ENCODE measurements at regions of chr1 and their contacts with region 1.

Region 1: GRCh38 chr1:209747580-209748262 is 8.1 kb upstream of the TRAF3IP3 start:
- DNase-seq: peak; percentile 95
- H3K4me3 Mint-ChIP-seq: peak overlapping the region; percentile 83
- H3K27ac Mint-ChIP-seq: peak overlapping the region; percentile 88
- H3K4me1 Mint-ChIP-seq: peaks cover 70% of the 10 kb centered on the region
- H3K27me3 Mint-ChIP-seq: no peaks in the 10 kb centered on the region

Region 2: GRCh38 chr1:209576798-209577197 is 170.9 kb before region 1 on chr1:
- intact Hi-C with region 1: loop called (anchors 1 kb)
- DNase-seq: peak; percentile 92
- H3K4me3 Mint-ChIP-seq: no peak overlapping the region
- H3K27ac Mint-ChIP-seq: no peak overlapping the region
- H3K4me1 Mint-ChIP-seq: peaks cover 5% of the 10 kb centered on the region
- H3K27me3 Mint-ChIP-seq: peaks cover 33% of the 10 kb centered on the region

Region 3: DNA sequence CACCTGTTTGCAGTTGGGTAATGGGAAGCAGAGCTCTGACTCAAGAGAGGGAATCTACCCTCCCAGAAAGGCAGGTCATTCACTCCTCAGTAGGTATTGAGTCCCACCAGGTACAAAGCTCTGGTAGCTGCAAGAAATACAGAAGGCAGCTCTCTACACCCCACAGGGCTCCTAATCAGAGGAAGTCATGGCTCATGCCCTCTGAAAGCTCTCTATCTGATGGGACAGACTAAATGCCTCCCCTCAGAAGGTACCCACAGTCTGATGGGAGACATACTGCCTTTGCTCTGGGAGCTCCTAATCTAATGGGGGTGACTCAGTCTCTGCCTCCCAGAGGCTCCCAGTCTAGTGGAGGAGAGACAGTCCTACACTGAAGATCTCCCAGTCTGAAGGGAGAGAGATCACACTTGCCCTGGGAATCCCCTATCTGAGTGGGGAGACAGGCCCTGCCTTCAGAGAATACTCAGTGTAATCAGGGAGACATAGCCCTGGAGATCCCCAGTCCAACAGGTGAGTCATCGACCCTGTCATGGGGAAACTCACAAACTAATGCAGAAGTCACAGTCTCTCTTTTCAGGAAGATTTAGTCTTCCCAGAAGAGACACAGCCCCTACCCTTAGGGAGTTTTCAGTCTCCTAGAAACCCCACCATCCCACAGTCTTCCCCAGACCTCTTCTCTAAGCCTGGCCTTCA is 140.5 kb before region 1 on chr1:
- intact Hi-C with region 1: loop called (anchors 1 kb)
- DNase-seq: peak; percentile 71
- H3K4me3 Mint-ChIP-seq: peak overlapping the region; percentile 17
- H3K27ac Mint-ChIP-seq: peak overlapping the region; percentile 45
- H3K4me1 Mint-ChIP-seq: peaks cover 10% of the 10 kb centered on the region
- H3K27me3 Mint-ChIP-seq: no peaks in the 10 kb centered on the region

Region 4: DNA sequence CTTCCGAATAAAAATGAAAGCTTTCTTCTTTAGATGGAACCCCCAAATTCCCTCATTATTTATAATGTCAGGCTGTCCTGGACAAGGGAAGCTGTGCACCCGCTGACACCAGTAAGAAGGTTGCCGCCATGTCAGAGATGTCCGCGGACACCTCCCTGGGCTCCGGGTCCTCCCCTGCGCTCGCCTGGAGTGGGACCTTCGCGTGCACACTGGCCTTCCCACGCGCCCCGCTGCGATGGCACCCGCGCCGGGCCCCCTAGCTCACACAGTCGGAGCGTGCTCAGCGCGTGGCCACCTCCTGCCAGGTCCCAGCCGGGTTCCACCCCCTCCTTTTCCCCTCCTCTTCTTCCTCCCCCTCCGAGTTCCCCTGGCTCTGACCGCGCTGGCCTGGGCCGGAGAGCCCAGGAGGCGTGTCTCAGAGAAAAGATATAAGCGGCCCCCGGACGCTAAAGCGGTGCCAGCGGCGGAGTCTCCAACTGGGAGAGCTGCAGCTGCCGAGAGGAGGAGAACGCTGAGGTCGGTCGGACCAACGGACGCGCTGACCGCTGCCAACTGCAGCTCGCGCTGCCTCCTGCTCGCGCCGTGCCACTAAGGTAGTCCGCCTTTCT is 72.7 kb before region 1 on chr1 and contains the start of gene G0S2:
- intact Hi-C with region 1: loop called (anchors 1 kb)
- DNase-seq: peak; percentile 82
- H3K4me3 Mint-ChIP-seq: peak within 1 kb of the TSS; percentile 89
- H3K27ac Mint-ChIP-seq: peak within 1 kb of the TSS; percentile 79
- H3K4me1 Mint-ChIP-seq: peaks cover 75% of the 10 kb centered on the region
- H3K27me3 Mint-ChIP-seq: peaks cover 6% of the 10 kb centered on the region
- total RNA-seq, gene G0S2: 449 and 477 TPM in 2 replicates

Region 5: GRCh38 chr1:209710093-209710492 is 37.6 kb before region 1 on chr1:
- intact Hi-C with region 1: loop called (anchors 5 kb)
- DNase-seq: no peak
- H3K4me3 Mint-ChIP-seq: peak overlapping the region; percentile 55
- H3K27ac Mint-ChIP-seq: peak overlapping the region; percentile 93
- H3K4me1 Mint-ChIP-seq: peaks cover 63% of the 10 kb centered on the region
- H3K27me3 Mint-ChIP-seq: no peaks in the 10 kb centered on the region

Region 6: GRCh38 chr1:209736490-209737117 is 11.1 kb before region 1 on chr1:
- intact Hi-C with region 1: loop called (anchors 1 kb)
- DNase-seq: no peak
- H3K4me3 Mint-ChIP-seq: peak overlapping the region; percentile 34
- H3K27ac Mint-ChIP-seq: peak overlapping the region; percentile 93
- H3K4me1 Mint-ChIP-seq: peaks cover 54% of the 10 kb centered on the region
- H3K27me3 Mint-ChIP-seq: no peaks in the 10 kb centered on the region

Region 7: DNA sequence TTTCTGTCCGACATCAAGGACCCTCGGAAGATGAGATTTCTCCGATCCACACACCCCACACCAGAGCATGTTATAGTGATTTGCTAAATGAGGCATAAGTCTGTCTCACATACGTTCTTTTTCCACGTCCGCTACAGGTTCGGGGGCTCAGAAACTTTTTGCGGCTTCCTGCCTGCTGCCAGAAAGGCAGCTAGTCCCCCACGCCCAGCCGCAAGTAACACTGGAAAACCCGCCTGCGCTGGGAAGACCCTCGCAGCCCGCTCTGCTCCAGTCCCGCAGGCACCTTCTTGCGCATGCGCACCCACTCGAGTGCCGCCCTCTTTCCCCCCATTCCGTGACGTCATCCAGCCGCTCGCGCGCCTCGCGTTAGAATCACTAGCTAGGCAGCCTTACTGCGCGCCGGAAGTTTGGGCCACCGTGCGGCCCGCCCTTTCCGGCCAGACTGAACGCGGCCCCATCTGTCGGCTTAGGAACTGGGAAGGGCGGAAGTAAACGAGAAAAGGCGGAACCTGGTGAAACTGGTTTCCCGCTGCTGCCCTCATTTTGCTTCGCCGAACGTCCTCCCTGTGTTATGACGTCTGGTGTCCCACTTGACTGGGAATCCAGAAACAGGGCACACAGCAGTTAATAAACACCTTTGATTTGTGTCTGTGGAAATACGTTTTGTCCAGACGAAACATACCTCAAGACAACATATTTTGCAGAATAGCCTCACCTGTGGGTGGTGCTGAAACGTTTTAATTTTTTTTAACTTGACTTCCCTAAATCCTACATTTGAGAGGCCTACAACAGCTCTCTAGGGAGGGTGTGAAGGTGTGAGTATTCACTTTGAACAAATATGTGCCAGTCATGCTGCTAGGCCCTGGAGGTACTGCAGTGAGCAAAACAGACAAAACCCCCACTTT is 36.8 kb after region 1 on chr1 and contains the start of gene C1orf74:
- intact Hi-C with region 1: loop called (anchors 1 kb)
- DNase-seq: peak; percentile 100
- H3K4me3 Mint-ChIP-seq: peak within 1 kb of the TSS; percentile 98
- H3K27ac Mint-ChIP-seq: peak within 1 kb of the TSS; percentile 99
- H3K4me1 Mint-ChIP-seq: peaks cover 51% of the 10 kb centered on the region
- H3K27me3 Mint-ChIP-seq: peaks cover 3% of the 10 kb centered on the region
- total RNA-seq, gene C1orf74: 2.4 and 3.2 TPM in 2 replicates

Region 8: GRCh38 chr1:209839875-209840491 is 92.3 kb after region 1 on chr1:
- intact Hi-C with region 1: no loop called
- DNase-seq: no peak
- H3K4me3 Mint-ChIP-seq: peak overlapping the region; percentile 45
- H3K27ac Mint-ChIP-seq: peak overlapping the region; percentile 84
- H3K4me1 Mint-ChIP-seq: peaks cover 42% of the 10 kb centered on the region
- H3K27me3 Mint-ChIP-seq: no peaks in the 10 kb centered on the region